Natural killer cell (primary cell): ENCODE measurements at regions of chr11 and their contacts with region 1.

Region 1: DNA sequence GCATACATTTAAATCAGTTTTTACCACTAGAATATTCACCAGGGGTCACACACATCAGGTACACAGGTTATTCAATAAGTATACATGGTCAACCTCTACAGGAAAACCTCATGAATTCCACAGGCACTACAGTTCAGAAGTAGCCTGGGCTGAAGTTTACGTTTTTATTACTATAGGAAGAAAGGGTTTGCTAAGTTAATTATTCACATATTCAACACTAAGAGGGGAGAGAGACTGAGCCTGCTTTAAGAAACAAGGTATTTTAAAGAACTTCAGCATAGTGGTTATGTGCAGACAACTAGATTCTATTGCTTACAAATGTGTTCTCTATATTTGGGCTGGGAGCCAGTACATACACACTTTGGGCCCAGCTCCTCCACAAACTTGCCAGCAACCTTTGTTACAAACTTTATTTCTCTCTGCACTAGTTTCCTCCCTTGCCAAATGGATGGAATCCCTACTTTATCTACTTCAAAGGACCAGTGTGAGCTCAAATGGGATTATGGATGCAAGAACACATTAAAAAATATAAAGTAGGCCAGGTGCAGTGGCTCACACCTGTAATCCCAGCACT is 31.9 kb downstream of the IL18BP start:
- DNase-seq: no peak
- ATAC-seq: no peak
- H3K4me3 ChIP-seq: no peak overlapping the region
- H3K4me3 Mint-ChIP-seq: no peak overlapping the region
- H3K27ac ChIP-seq: no peak overlapping the region
- H3K27ac Mint-ChIP-seq: peak overlapping the region; percentile 39 to 50
- H3K4me1 ChIP-seq: no peaks in the 10 kb centered on the region
- H3K4me1 Mint-ChIP-seq: peaks cover 26 to 32% of the 10 kb centered on the region in 2 donors
- H3K27me3 ChIP-seq: no peaks in the 10 kb centered on the region
- H3K27me3 Mint-ChIP-seq: no peaks in the 10 kb centered on the region
- CTCF ChIP-seq: no peak

Region 2: DNA sequence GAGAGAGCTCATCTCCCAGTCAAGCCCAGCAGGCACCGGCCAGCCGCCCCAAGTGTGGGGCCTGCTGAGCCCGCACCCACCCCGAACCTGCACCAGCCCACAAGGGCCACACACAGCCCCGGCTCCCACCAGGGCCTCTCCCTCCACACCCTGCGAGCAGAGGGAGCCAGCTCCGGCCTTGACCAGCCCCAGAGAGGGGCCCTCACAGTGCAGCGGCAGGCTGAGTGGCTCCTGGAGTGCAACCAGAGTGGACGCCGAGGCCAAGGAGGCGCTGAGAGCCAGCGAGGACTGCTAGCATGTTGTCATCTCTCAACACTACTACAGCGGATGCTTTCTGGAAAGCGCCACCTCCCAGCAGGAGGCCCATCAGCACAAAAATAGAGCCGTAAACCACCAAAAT is 186.7 kb before region 1 on chr11:
- intact Hi-C with region 1: no loop called
- DNase-seq: no peak
- ATAC-seq: no peak
- H3K4me3 ChIP-seq: no peak overlapping the region
- H3K4me3 Mint-ChIP-seq: no peak overlapping the region
- H3K27ac ChIP-seq: no peak overlapping the region
- H3K27ac Mint-ChIP-seq: no peak overlapping the region
- H3K4me1 ChIP-seq: no peaks in the 10 kb centered on the region
- H3K4me1 Mint-ChIP-seq: no peaks in the 10 kb centered on the region
- H3K27me3 ChIP-seq: no peaks in the 10 kb centered on the region
- H3K27me3 Mint-ChIP-seq: peaks cover 5 to 31% of the 10 kb centered on the region in 2 donors
- CTCF ChIP-seq: no peak

Region 3: GRCh38 chr11:72091005-72091691 is 60.6 kb after region 1 on chr11:
- intact Hi-C with region 1: loop called (anchors 1 kb)
- DNase-seq: peak; percentile 56 to 85
- ATAC-seq: peak; percentile 92 to 100 (median 97)
- H3K4me3 ChIP-seq: no peak overlapping the region
- H3K4me3 Mint-ChIP-seq: no peak overlapping the region
- H3K27ac ChIP-seq: no peak overlapping the region
- H3K27ac Mint-ChIP-seq: peak overlapping the region in 1 of 2 donors; percentile 42
- H3K4me1 ChIP-seq: no peaks in the 10 kb centered on the region
- H3K4me1 Mint-ChIP-seq: peaks cover 0 to 15% of the 10 kb centered on the region in 2 donors
- H3K27me3 ChIP-seq: no peaks in the 10 kb centered on the region
- H3K27me3 Mint-ChIP-seq: no peaks in the 10 kb centered on the region
- CTCF ChIP-seq: peak; percentile 84

Region 4: GRCh38 chr11:72144807-72145560 is 114.4 kb after region 1 on chr11:
- intact Hi-C with region 1: loop called (anchors 1 kb)
- DNase-seq: no peak
- ATAC-seq: no peak
- H3K4me3 ChIP-seq: no peak overlapping the region
- H3K4me3 Mint-ChIP-seq: no peak overlapping the region
- H3K27ac ChIP-seq: no peak overlapping the region
- H3K27ac Mint-ChIP-seq: no peak overlapping the region
- H3K4me1 ChIP-seq: peaks cover 3% of the 10 kb centered on the region
- H3K4me1 Mint-ChIP-seq: peaks cover 4% of the 10 kb centered on the region in 2 donors
- H3K27me3 ChIP-seq: no peaks in the 10 kb centered on the region
- H3K27me3 Mint-ChIP-seq: peaks cover 0 to 7% of the 10 kb centered on the region in 2 donors
- CTCF ChIP-seq: no peak

Region 5: GRCh38 chr11:72343006-72343756 is 312.6 kb after region 1 on chr11:
- intact Hi-C with region 1: no loop called
- DNase-seq: no peak
- ATAC-seq: no peak
- H3K4me3 ChIP-seq: no peak overlapping the region
- H3K4me3 Mint-ChIP-seq: no peak overlapping the region
- H3K27ac ChIP-seq: no peak overlapping the region
- H3K27ac Mint-ChIP-seq: no peak overlapping the region
- H3K4me1 ChIP-seq: no peaks in the 10 kb centered on the region
- H3K4me1 Mint-ChIP-seq: no peaks in the 10 kb centered on the region
- H3K27me3 ChIP-seq: no peaks in the 10 kb centered on the region
- H3K27me3 Mint-ChIP-seq: no peaks in the 10 kb centered on the region
- CTCF ChIP-seq: no peak

Region 6: GRCh38 chr11:72497731-72498130 is 467.2 kb after region 1 on chr11:
- intact Hi-C with region 1: no loop called
- DNase-seq: no peak
- ATAC-seq: no peak
- H3K4me3 ChIP-seq: no peak overlapping the region
- H3K4me3 Mint-ChIP-seq: no peak overlapping the region
- H3K27ac ChIP-seq: no peak overlapping the region
- H3K27ac Mint-ChIP-seq: no peak overlapping the region
- H3K4me1 ChIP-seq: no peaks in the 10 kb centered on the region
- H3K4me1 Mint-ChIP-seq: peaks cover 9 to 10% of the 10 kb centered on the region in 2 donors
- H3K27me3 ChIP-seq: no peaks in the 10 kb centered on the region
- H3K27me3 Mint-ChIP-seq: peaks cover 0 to 4% of the 10 kb centered on the region in 2 donors
- CTCF ChIP-seq: no peak